ENCODE measurements at regions of chr1 and their contacts with region 1.

Region 1: DNA sequence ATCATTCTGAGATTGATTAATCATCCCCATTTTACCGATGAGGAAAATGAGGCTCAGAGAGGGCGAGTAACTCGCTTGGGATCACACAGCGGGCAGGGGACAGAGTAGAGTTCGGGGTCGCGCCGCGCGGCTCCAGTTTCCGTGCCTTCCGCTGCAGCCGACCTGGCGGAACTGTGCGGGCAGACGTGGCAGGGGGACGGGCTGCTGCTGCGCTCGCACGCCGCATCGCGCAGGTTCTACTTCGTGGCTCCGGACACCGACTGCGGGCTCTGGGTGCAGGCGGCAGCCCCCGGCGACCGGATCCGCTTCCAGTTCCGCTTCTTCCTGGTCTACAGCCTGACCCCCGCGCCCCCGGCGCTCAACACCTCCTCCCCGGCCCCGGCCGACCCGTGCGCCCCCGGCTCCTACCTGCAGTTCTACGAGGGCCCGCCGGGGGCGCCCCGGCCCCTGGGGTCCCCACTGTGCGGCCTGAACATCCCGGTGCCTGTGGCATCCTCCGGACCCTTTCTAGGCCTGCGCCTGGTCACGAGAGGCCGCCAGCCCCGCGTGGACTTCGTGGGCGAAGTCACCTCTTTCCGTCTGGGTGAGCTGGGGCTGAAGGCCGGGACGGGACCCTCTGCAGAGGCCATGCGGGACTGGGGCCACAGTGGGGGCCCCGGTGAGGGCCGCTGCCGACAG is 2.3 kb downstream of the LDLRAD2 start:
- DNase-seq: peak; percentile 34 to 50 (median 43)
- H3K4me3 ChIP-seq: peak overlapping the region; percentile 21 to 72 (median 39)
- H3K4me3 Mint-ChIP-seq: peak overlapping the region; percentile 73 to 88
- H3K27ac ChIP-seq: no peak overlapping the region
- H3K27ac Mint-ChIP-seq: no peak overlapping the region
- H3K4me1 ChIP-seq: peaks cover 28 to 35% of the 10 kb centered on the region in 2 donors
- H3K4me1 Mint-ChIP-seq: peaks cover 31% of the 10 kb centered on the region
- H3K27me3 ChIP-seq: no peaks in the 10 kb centered on the region
- H3K27me3 Mint-ChIP-seq: peaks cover 5 to 12% (median 9%) of the 10 kb centered on the region in 3 donors
- CTCF ChIP-seq: peak; percentile 79

Region 2: DNA sequence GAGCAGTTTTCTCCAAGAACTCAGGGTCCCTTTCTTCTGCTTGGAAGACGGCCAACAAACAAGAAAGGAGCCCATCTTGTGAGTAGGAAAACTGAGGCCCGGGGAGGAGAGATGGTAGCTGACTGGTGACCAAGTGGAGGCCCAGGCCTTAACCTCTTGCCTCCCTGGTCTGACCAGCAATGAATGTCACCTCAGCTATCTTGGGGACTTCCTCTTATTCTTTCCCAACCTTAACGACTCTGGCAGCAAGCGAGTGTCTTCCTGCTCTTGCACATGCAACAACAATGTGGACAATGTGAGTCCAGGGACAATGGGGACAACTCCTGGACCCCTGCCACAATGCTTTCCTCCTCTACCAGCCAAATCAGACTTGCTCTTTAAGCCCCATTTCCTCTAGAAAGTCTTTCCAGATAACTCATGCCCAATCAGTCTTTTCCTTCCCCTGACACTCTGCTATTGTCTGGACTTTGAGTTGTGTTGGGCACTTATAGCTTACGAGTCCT is 110.2 kb after region 1 on chr1:
- intact Hi-C with region 1: no loop called
- DNase-seq: peak in 2 of 3 donors; percentile 23 to 48
- H3K4me3 ChIP-seq: no peak overlapping the region
- H3K4me3 Mint-ChIP-seq: no peak overlapping the region
- H3K27ac ChIP-seq: no peak overlapping the region
- H3K27ac Mint-ChIP-seq: peak overlapping the region in 1 of 7 donors; percentile 24
- H3K4me1 ChIP-seq: peaks cover 6 to 9% of the 10 kb centered on the region in 2 donors
- H3K4me1 Mint-ChIP-seq: peaks cover 19% of the 10 kb centered on the region
- H3K27me3 ChIP-seq: no peaks in the 10 kb centered on the region
- H3K27me3 Mint-ChIP-seq: peaks cover 0 to 11% (median 0%) of the 10 kb centered on the region in 3 donors
- CTCF ChIP-seq: no peak

Region 3: DNA sequence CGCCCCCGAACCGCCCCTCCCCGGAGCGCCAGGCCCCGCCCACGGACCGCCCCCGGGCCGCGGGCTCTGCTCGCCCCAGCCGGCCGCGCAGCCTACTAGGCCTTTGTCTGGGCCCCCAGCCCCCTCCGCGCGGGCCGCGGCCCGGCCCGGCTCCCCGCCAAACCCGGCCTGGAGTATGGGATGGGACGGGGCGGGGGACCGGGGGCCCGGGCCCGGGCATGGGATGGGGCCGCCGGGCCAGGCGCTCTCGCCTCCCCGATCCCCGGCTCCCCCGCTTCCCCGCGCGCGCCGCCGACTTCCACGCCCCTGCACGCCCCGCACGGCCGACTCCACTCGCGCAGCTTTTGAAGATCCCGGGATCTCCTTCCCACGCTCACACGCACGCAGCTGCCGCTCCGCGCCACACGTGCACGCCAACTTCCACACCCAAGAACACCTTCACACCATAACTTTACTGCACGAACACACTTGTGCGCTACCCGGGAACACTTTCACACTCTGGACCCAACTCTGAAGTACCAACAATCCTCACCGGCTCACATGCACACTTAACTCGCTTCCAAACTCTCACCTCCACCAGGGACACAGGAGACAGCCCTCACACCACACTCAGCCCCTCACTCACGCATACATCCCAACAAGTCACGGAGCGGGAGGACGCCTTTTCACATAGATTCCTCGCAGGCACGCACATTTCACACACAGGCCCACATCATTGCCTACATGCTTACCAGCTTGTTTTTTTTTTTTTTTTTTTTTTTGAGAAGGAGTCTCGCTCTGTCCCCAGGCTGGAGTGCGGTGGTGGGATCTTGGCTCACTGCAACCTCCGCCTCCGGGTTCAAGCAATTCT is 123.2 kb after region 1 on chr1:
- intact Hi-C with region 1: loop called (anchors 5 to 10 kb)
- DNase-seq: peak; percentile 53 to 71 (median 65)
- H3K4me3 ChIP-seq: peak overlapping the region; percentile 14 to 70 (median 22)
- H3K4me3 Mint-ChIP-seq: peak overlapping the region; percentile 92 to 96
- H3K27ac ChIP-seq: no peak overlapping the region
- H3K27ac Mint-ChIP-seq: peak overlapping the region; percentile 7 to 81 (median 37)
- H3K4me1 ChIP-seq: peaks cover 23 to 36% of the 10 kb centered on the region in 2 donors
- H3K4me1 Mint-ChIP-seq: peaks cover 34% of the 10 kb centered on the region
- H3K27me3 ChIP-seq: peaks cover 4 to 9% of the 10 kb centered on the region in 2 donors
- H3K27me3 Mint-ChIP-seq: peaks cover 13 to 24% (median 16%) of the 10 kb centered on the region in 3 donors
- CTCF ChIP-seq: no peak